GM12878 (cell line): ENCODE measurements at regions of chr2 and their contacts with region 1.

Region 1: DNA sequence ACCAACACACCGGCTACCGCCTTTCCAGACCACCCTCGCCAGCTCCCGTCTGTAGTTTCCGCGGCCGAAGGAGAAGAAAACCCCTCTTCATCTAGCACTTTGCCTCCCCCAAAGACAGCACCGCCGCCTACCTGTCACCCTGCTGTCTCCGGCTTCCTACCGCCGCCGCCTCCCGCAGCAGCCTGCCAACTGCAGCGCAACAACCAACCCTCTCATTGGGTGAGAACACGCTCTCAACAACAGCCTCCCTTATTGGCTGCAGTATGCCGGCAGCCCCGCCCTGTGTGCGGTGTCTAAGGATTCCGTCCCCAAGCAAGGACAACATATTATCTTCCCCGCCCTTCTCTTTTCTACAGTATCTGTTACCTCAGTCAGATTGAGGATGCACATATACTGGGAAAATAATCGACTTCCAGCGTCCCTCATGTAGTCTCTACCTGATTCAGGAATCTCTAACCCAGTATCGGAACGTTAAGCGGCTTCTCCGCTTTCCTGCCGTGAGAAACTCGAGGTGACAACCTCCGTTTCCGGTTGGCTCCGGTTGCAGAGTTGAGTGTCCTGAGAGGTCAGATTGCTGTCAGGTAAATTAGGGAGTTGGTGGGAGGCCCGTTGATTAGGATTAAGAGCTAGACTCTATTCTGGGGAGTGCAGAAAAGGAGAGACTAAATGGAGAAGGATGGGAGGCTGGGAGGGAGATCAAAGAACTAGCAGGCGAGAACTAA is at the starts of genes HYCC2 and NDUFB3:
- DNase-seq: peak; percentile 95
- ATAC-seq: peak; percentile 97
- H3K4me3 ChIP-seq: peak within 1 kb of the TSS; percentile 80
- H3K27ac ChIP-seq: peak within 1 kb of the TSS; percentile 92
- H3K4me1 ChIP-seq: peaks cover 23% of the 10 kb centered on the region
- H3K27me3 ChIP-seq: no peaks in the 10 kb centered on the region
- CTCF ChIP-seq: peak in 2 of 3 experiments; percentile 28 to 43; a peak in 3 of 6 replicates
- EP300 ChIP-seq: 0 out of 4 replicates have a peak, but pooled peaks of 1 of the 2 experiments have one; percentile 13
- POLR2A ChIP-seq: peak; percentile 91
- RAD21 ChIP-seq: no peak
- polyA plus RNA-seq, gene HYCC2: 3.4 to 6.8 TPM
- polyA plus RNA-seq, gene NDUFB3: 1,005 to 1,059 TPM

Region 2: DNA sequence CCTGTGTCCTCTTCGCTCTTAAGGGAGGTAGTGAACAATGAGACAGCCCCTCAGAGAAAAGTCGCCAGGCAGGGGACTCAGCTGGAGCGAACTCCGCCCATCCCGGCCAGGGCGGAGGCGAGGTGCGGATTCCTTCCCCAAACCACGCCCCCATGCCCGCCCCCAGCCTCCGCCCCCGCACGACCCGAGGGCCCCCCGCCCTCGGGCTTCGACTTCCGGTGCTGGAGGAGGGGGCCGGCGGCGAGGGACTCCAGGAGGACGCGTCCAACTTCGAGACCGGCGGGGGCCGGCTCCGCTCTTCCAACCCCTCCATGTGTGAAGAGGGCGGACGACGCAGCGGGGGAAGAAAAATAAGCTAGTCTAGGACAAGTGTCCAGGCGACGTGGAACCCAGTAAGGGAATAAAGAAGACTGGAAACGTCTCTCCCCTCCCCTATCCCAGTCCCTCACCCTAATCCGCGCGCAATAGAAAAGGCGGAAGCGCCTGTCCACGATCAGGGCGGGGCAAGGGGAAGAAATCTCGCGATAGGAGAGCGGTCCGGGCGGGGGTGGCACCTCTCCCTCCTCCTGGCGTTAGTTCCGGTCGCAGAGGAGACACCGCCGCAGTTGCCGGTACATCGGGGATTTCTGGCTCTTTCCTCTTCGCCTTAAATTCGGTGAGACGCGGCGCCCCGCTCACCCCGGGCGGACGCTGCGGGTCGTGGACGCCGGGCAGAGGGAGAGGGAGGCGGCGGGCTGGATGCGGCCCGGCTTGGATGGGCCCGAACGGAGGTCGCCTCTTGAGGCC is 260.1 kb before region 1 on chr2 and contains the start of gene BZW1:
- CTCF ChIA-PET with region 1: no interaction called
- POLR2A ChIA-PET with region 1: no interaction called
- RAD21 ChIA-PET with region 1: interaction called, 5 read pairs
- SMC1A ChIA-PET with region 1: interaction called, 4 read pairs
- in situ Hi-C with region 1: no loop called
- intact Hi-C with region 1: loop called (anchors 10 kb)
- DNase-seq: peak; percentile 88
- ATAC-seq: peak; percentile 86
- H3K4me3 ChIP-seq: peak within 1 kb of the TSS; percentile 88
- H3K27ac ChIP-seq: peak within 1 kb of the TSS; percentile 100
- H3K4me1 ChIP-seq: peaks cover 19% of the 10 kb centered on the region
- H3K27me3 ChIP-seq: no peaks in the 10 kb centered on the region
- CTCF ChIP-seq: no peak
- EP300 ChIP-seq: 0 out of 4 replicates have a peak, but pooled peaks of 1 of the 2 experiments have one; percentile 5
- POLR2A ChIP-seq: peak; percentile 90
- RAD21 ChIP-seq: no peak
- polyA plus RNA-seq, gene BZW1: 200 to 317 TPM

Region 3: GRCh38 chr2:200901459-200902072 is 170.1 kb before region 1 on chr2:
- CTCF ChIA-PET with region 1: interaction called, 256 read pairs
- POLR2A ChIA-PET with region 1: interaction called, 7 read pairs
- RAD21 ChIA-PET with region 1: interaction called, 82 read pairs
- SMC1A ChIA-PET with region 1: interaction called, 144 read pairs
- in situ Hi-C with region 1: loop called (anchors 5 kb)
- intact Hi-C with region 1: loop called (anchors 1 kb)
- DNase-seq: peak; percentile 72
- ATAC-seq: peak; percentile 99
- H3K4me3 ChIP-seq: no peak overlapping the region
- H3K27ac ChIP-seq: no peak overlapping the region
- H3K4me1 ChIP-seq: no peaks in the 10 kb centered on the region
- H3K27me3 ChIP-seq: no peaks in the 10 kb centered on the region
- CTCF ChIP-seq: peak; percentile 71 to 90 (median 87); a peak in 5 of 6 replicates
- EP300 ChIP-seq: no peak
- POLR2A ChIP-seq: no peak
- RAD21 ChIP-seq: peak; percentile 76

Region 4: GRCh38 chr2:200975672-200976071 is 96.0 kb before region 1 on chr2:
- CTCF ChIA-PET with region 1: interaction called, 12 read pairs
- POLR2A ChIA-PET with region 1: no interaction called
- RAD21 ChIA-PET with region 1: interaction called, 10 read pairs
- SMC1A ChIA-PET with region 1: interaction called, 26 read pairs
- in situ Hi-C with region 1: no loop called
- intact Hi-C with region 1: no loop called
- DNase-seq: no peak
- ATAC-seq: no peak
- H3K4me3 ChIP-seq: no peak overlapping the region
- H3K27ac ChIP-seq: no peak overlapping the region
- H3K4me1 ChIP-seq: no peaks in the 10 kb centered on the region
- H3K27me3 ChIP-seq: no peaks in the 10 kb centered on the region
- CTCF ChIP-seq: no peak
- EP300 ChIP-seq: no peak
- POLR2A ChIP-seq: no peak
- RAD21 ChIP-seq: no peak

Region 5: GRCh38 chr2:201130524-201131186 is 59.0 kb after region 1 on chr2:
- CTCF ChIA-PET with region 1: interaction called, 6 read pairs
- POLR2A ChIA-PET with region 1: interaction called, 4 read pairs
- RAD21 ChIA-PET with region 1: interaction called, 5 read pairs
- SMC1A ChIA-PET with region 1: interaction called, 4 read pairs
- in situ Hi-C with region 1: no loop called
- intact Hi-C with region 1: loop called (anchors 2 kb)
- DNase-seq: no peak
- ATAC-seq: peak; percentile 7
- H3K4me3 ChIP-seq: peak overlapping the region; percentile 88
- H3K27ac ChIP-seq: peak overlapping the region; percentile 99
- H3K4me1 ChIP-seq: peaks cover 23% of the 10 kb centered on the region
- H3K27me3 ChIP-seq: no peaks in the 10 kb centered on the region
- CTCF ChIP-seq: no peak
- EP300 ChIP-seq: no peak; a peak in 1 of 4 replicates
- POLR2A ChIP-seq: no peak
- RAD21 ChIP-seq: no peak

Region 6: GRCh38 chr2:201176081-201176481 is 104.4 kb after region 1 on chr2:
- CTCF ChIA-PET with region 1: interaction called, 37 read pairs
- POLR2A ChIA-PET with region 1: interaction called, 3 read pairs
- RAD21 ChIA-PET with region 1: interaction called, 31 read pairs
- SMC1A ChIA-PET with region 1: interaction called, 20 read pairs
- in situ Hi-C with region 1: loop called (anchors 5 kb)
- intact Hi-C with region 1: loop called (anchors 1 kb)
- DNase-seq: no peak
- ATAC-seq: no peak
- H3K4me3 ChIP-seq: no peak overlapping the region
- H3K27ac ChIP-seq: no peak overlapping the region
- H3K4me1 ChIP-seq: no peaks in the 10 kb centered on the region
- H3K27me3 ChIP-seq: no peaks in the 10 kb centered on the region
- CTCF ChIP-seq: no peak
- EP300 ChIP-seq: no peak
- POLR2A ChIP-seq: no peak
- RAD21 ChIP-seq: no peak